ENCODE measurements at regions of chr16 and their contacts with region 1.

Region 1: GRCh38 chr16:78705694-78706093 is 606.2 kb downstream of the WWOX start:
- DNase-seq: peak in 1 of 35 experiments; percentile 64
- ATAC-seq: peak in 3 of 4 experiments; percentile 35 to 69 (median 54)
- H3K4me3 ChIP-seq: no peak overlapping the region
- H3K4me3 Mint-ChIP-seq: no peak overlapping the region
- H3K27ac ChIP-seq: no peak overlapping the region
- H3K27ac Mint-ChIP-seq: no peak overlapping the region
- H3K4me1 ChIP-seq: no peaks in the 10 kb centered on the region
- H3K4me1 Mint-ChIP-seq: peaks cover 2 to 8% (median 5%) of the 10 kb centered on the region in 3 donors
- H3K27me3 ChIP-seq: no peaks in the 10 kb centered on the region
- H3K27me3 Mint-ChIP-seq: no peaks in the 10 kb centered on the region

Region 2: DNA sequence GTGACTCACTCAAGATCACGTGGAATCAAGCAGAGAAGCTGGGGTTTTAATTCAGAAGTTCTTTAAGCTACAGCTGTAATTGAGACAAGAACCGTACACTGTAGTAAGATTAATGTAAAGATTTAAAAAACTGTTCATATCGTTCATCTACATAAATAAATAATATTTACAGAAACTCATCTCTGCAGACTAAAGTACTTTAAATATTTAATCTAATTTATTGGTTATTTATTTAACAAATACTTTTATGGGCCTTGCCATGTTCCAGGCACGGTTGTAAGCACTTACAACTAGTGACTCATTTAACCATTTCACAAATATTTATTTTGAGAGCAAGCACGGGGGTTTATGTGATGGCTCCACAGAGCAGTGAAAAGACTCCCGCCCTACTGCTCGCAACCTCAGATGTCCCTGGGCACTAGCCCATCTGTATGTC is 30.5 kb before region 1 on chr16:
- CTCF ChIA-PET with region 1: no interaction called
- POLR2A ChIA-PET with region 1: no interaction called
- DNase-seq: no peak
- ATAC-seq: no peak
- H3K4me3 ChIP-seq: no peak overlapping the region
- H3K4me3 Mint-ChIP-seq: no peak overlapping the region
- H3K27ac ChIP-seq: no peak overlapping the region
- H3K27ac Mint-ChIP-seq: no peak overlapping the region
- H3K4me1 ChIP-seq: no peaks in the 10 kb centered on the region
- H3K4me1 Mint-ChIP-seq: no peaks in the 10 kb centered on the region
- H3K27me3 ChIP-seq: no peaks in the 10 kb centered on the region
- H3K27me3 Mint-ChIP-seq: no peaks in the 10 kb centered on the region

Region 3: DNA sequence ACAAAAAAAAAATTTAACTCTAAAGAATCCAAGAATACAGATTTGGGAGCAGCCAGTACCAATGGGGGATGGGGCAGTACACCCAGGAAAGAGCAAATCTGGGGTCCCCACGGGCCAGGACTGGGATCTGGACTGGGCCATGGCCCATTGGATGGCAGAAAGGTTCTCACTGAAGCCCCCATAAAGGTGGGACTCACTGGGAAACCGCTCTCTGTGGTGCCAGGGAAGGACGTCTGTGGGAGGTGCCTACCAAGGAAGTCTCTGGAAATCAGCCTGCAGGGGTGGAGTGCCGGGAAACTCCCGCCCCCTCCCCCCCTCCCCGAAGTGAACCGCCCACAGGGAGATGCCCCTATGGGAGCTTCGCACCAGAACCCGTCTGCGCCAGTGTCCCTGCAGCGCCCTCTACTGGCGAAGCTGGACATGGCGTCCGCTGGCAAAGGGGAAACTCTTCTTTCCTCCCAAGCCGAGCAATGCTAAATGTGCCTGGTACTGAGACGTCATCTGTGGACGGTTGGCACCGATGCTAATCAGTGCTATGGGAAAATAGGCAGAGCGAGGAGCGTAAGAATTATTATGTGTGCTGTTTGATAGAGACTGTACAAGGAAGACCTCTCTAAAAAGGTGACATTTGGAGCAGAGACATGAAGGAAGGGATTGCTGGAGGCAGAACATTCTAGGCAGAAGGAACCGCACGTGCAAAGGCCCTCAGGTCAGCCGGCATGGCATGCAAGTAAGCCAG is 64.8 kb after region 1 on chr16:
- CTCF ChIA-PET with region 1: interaction called, 4 to 18 read pairs
- POLR2A ChIA-PET with region 1: no interaction called
- DNase-seq: peak; percentile 42 to 88 (median 71)
- ATAC-seq: peak; percentile 77 to 84 (median 79)
- H3K4me3 ChIP-seq: no peak overlapping the region
- H3K4me3 Mint-ChIP-seq: no peak overlapping the region
- H3K27ac ChIP-seq: peak overlapping the region; percentile 30
- H3K27ac Mint-ChIP-seq: peak overlapping the region in 1 of 2 donors; percentile 76
- H3K4me1 ChIP-seq: peaks cover 0 to 28% of the 10 kb centered on the region in 2 experiments
- H3K4me1 Mint-ChIP-seq: peaks cover 15 to 24% (median 15%) of the 10 kb centered on the region in 3 donors
- H3K27me3 ChIP-seq: peaks cover 0 to 7% of the 10 kb centered on the region in 2 experiments
- H3K27me3 Mint-ChIP-seq: peaks cover 0 to 2% of the 10 kb centered on the region in 2 donors